ENCODE measurements at regions of chr6 and their contacts with region 1.

Region 1: DNA sequence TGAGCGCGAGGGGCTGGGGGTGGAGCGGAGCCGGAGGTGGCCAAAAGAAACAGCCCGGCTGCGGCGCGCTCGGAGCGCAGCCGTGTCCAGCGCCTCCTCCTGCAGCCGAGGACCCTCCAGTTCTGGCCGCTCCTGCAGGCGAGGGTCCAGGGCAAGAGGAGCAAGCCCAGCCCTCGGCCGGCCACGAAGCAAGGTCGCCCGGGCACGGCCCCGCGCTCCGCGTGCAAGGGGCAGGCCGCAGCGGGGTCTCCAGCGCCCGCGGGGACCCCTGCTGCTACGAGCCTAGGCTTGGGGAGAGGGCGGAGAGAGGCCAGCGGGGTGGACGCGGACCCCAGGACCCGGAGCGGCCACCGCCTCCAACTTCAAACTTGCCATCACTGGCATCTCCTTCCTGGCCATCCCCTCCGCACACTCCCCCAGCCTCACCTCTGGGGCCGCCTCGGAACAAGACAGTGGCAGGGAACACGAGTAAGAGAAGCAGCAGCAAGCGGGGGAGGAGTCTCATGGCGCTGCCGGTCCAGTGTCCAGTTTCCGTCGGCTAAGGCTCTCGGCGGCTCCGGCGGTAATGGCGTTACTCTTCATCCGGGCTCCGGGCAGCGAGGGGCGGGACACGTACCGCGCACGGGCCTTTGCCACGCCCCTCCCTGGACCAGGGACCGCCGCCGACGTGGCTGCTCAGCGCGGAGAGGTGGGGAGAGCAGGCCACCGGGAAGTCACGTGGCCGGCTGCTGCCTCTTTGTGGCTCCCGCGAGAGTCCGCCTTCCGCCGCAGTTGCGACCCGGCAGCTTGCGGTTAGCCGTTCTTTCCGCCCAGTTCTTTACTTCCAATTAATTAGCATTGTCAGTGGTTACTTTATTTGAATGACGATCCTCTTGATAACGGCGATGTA is at the start of gene SSR1:
- DNase-seq: peak; percentile 76 to 97 (median 84)
- ATAC-seq: peak; percentile 99
- H3K4me3 ChIP-seq: peak within 1 kb of the TSS; percentile 66
- H3K4me3 Mint-ChIP-seq: peak within 1 kb of the TSS; percentile 83 to 99 (median 94)
- H3K27ac ChIP-seq: peak within 1 kb of the TSS; percentile 76
- H3K27ac Mint-ChIP-seq: peak within 1 kb of the TSS; percentile 87 to 93 (median 92)
- H3K4me1 ChIP-seq: peaks cover 6 to 27% of the 10 kb centered on the region in 2 donors
- H3K4me1 Mint-ChIP-seq: peaks cover 31 to 65% (median 50%) of the 10 kb centered on the region in 7 donors
- H3K27me3 ChIP-seq: no peaks in the 10 kb centered on the region
- H3K27me3 Mint-ChIP-seq: no peaks in the 10 kb centered on the region
- total RNA-seq, gene SSR1: 75.0 to 178 (median 127) TPM

Region 2: DNA sequence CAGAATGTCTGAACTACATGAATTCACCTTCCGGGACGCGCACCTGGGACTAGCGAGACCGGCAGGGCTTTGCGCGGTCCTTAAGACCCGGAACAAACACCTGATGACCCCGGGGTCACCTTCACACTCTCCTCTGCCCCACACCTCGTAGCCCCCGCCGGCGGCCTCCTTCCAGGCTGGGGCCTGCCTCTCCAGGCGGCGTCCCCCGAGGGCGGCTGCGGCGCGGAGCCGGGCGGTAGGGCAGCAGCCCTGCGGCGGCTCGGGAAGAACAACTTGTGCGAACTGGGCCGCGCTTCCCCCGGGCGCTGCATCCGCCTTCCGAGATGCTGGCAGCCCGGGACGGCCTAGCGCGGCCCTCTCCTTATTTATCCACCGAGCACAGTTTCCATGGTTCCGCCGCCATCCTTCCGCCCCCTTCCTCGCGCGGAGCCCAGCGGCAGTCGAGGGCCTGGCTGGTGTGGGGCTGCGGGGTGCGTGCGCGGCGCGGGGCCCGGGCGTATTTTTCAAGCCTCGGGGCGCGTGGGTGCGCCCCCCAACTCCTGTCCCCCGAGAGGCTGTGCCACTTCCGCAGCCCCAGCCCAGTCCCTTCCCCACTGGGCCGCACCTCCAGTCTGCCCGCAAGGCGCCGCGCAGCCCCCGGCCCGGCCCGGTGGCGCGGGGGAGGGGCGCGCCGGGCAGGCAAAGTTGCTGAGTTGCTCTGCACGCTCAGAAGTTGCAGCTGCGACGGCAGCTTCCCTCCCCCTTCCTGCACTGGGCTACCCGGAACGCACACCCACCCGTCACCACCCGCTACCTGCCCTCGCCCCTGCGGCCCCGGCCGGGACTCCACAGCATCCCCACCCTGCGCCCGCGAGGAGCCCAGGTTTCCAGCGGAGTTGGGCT is 261.4 kb before region 1 on chr6:
- CTCF ChIA-PET with region 1: no interaction called
- POLR2A ChIA-PET with region 1: no interaction called
- intact Hi-C with region 1: loop called in 1 of 2 experiments (anchors 2 kb)
- DNase-seq: peak; percentile 34 to 81 (median 70)
- ATAC-seq: peak; percentile 83
- H3K4me3 ChIP-seq: peak overlapping the region; percentile 77
- H3K4me3 Mint-ChIP-seq: peak overlapping the region; percentile 20 to 89 (median 79)
- H3K27ac ChIP-seq: peak overlapping the region; percentile 59
- H3K27ac Mint-ChIP-seq: peak overlapping the region in 6 of 9 donors; percentile 69 to 86 (median 79)
- H3K4me1 ChIP-seq: peaks cover 0 to 4% of the 10 kb centered on the region in 2 donors
- H3K4me1 Mint-ChIP-seq: peaks cover 5 to 18% (median 11%) of the 10 kb centered on the region in 7 donors
- H3K27me3 ChIP-seq: no peaks in the 10 kb centered on the region
- H3K27me3 Mint-ChIP-seq: peaks cover 0 to 66% (median 0%) of the 10 kb centered on the region in 5 donors

Region 3: DNA sequence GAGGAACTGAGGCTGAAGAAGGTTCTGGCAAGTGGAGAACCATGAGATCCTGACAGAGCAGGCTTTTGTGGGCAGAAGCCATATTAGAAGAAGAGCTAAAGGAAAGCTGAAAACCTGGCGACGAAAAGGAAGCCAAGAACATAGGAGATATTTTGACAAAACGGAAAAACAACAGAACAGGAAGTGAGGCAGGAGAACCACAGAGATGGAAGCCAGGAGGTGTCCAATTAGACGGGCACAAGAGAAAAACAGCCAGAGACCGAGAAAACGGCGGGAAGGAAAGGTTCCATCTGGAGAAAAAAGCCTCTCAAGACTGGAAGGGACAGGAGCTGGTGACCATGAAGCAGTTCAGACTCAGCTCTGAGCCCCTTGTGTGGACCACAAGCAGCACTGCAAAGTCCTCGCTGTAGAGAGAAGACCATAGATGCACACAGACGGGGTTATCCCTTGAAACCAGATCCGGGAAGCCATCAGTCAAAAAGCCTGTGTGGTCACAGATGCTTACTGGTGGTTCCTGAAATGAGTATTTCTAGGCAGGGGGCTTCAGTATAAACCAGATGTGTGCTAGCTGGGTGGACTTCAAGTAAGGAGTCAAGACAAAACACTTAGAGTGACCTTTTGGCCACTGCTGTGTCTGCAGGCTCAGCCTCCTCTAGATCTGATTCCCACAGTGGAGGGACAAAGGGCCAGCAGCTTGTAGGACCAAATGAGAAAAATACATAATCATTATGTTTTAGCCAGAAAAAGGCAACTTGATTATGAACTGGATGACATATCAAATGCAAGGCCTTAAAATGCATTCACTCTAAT is 30.6 kb before region 1 on chr6:
- CTCF ChIA-PET with region 1: no interaction called
- POLR2A ChIA-PET with region 1: no interaction called
- intact Hi-C with region 1: loop called (anchors 2 kb)
- DNase-seq: peak in 2 of 9 donors; percentile 14
- ATAC-seq: no peak
- H3K4me3 ChIP-seq: no peak overlapping the region
- H3K4me3 Mint-ChIP-seq: peak overlapping the region; percentile 14 to 64 (median 38)
- H3K27ac ChIP-seq: peak overlapping the region; percentile 1
- H3K27ac Mint-ChIP-seq: peak overlapping the region; percentile 41 to 96 (median 89)
- H3K4me1 ChIP-seq: peaks cover 0 to 9% of the 10 kb centered on the region in 2 donors
- H3K4me1 Mint-ChIP-seq: peaks cover 15 to 29% (median 21%) of the 10 kb centered on the region in 7 donors
- H3K27me3 ChIP-seq: no peaks in the 10 kb centered on the region
- H3K27me3 Mint-ChIP-seq: no peaks in the 10 kb centered on the region

Region 4: DNA sequence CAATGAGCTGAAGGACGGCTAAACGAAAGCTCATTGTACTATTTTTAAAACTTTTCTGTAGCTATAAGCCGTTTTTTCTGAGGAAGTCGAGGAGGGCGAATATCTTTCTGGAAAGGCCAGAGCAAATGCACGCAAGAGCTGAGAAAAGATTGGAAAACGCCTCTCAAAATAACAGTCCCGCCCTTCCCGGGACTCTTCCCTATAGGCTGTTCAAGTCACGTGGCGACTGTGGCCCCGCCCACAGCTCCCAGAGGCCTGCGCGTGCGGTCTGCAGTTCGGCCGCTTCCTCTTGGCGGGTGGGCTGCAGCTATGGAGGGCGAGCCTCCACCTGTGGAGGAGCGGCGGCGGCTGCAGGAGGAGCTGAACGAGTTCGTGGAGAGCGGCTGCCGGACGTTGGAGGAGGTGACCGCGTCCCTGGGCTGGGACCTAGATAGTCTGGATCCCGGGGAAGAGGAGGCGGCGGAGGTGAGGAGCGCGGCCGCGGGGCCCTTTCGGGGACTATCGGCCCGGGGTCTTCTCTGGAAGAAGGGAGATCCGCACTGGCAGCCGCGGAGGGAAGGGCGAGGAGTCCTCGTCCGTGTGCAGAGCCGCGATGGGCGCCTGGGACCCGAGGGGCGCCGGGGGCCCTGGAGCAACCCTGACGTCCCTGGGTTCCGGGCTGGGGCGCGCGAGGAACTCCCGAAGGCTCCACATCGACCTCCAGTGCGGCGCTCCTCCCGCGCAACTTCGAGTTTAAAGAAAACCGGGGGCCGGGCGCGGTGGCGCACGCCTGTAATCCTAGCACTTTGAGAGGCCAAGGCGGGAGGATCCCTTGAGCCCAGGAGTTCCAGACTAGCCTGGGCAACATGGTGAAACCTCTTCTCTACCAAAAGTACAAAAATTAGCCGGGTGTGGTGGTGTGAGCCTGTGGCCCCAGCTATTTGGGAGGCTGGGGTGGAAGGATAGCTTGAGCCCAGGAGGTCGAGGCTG is 277.4 kb after region 1 on chr6 and contains the start of gene SNRNP48:
- CTCF ChIA-PET with region 1: no interaction called
- POLR2A ChIA-PET with region 1: no interaction called
- intact Hi-C with region 1: loop called (anchors 1 kb)
- DNase-seq: peak; percentile 83 to 93 (median 88)
- ATAC-seq: peak; percentile 99
- H3K4me3 ChIP-seq: peak within 1 kb of the TSS; percentile 89
- H3K4me3 Mint-ChIP-seq: peak within 1 kb of the TSS; percentile 93 to 100 (median 99)
- H3K27ac ChIP-seq: peak within 1 kb of the TSS; percentile 77
- H3K27ac Mint-ChIP-seq: peak within 1 kb of the TSS; percentile 90 to 97 (median 94)
- H3K4me1 ChIP-seq: peaks cover 12 to 17% of the 10 kb centered on the region in 2 donors
- H3K4me1 Mint-ChIP-seq: peaks cover 28 to 62% (median 54%) of the 10 kb centered on the region in 7 donors
- H3K27me3 ChIP-seq: no peaks in the 10 kb centered on the region
- H3K27me3 Mint-ChIP-seq: peaks cover 0 to 2% (median 0%) of the 10 kb centered on the region in 5 donors
- total RNA-seq, gene SNRNP48: 8.6 to 30.4 (median 15.3) TPM

Region 5: DNA sequence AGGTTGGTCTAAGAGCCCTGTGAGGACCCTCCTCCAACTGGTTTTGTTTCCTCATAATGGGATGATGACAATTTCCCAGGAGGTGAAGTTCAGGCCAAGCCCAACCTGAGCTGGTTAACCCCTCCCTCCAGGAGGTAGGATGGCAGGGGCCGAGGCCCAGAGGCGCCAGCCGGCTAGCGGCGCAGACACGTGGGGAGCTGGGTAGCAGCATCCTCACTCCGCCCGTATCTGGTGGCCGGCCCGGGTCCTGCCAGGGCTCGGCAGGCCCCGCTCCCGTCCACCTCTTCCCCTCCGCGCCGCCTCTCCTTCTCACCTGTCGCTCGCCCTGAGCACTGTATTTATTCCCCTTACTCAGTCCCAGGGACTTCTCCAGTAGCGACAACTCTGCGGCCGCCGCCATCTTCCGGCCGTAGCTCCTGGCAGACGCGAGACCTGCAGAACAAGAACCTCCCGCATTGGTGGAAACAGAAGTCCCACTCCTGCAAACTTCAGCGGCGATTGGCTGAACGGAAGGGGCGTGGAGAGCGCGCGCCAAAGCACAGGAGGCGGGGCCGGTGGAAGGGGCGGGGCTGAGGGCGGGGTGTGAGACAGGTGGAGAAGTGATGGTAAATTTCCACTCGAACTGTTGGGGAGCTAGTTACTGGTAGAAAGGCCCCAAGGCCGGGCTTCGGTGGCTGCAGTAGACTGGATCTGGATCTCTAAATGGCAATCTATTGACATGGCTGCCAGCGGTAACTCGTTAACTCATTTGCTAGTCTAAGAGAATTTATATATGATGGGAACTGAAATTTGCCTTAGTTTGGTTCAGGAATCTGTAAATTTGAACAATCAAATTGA is 789.5 kb after region 1 on chr6 and contains the start of gene EEF1E1:
- CTCF ChIA-PET with region 1: no interaction called
- POLR2A ChIA-PET with region 1: no interaction called
- intact Hi-C with region 1: loop called (anchors 1 to 5 kb)
- DNase-seq: peak; percentile 77 to 97 (median 92)
- ATAC-seq: peak; percentile 100
- H3K4me3 ChIP-seq: peak within 1 kb of the TSS; percentile 75
- H3K4me3 Mint-ChIP-seq: peak within 1 kb of the TSS; percentile 85 to 100 (median 98)
- H3K27ac ChIP-seq: peak within 1 kb of the TSS; percentile 78
- H3K27ac Mint-ChIP-seq: peak within 1 kb of the TSS; percentile 91 to 99 (median 95)
- H3K4me1 ChIP-seq: peaks cover 6 to 8% of the 10 kb centered on the region in 2 donors
- H3K4me1 Mint-ChIP-seq: peaks cover 21 to 43% (median 34%) of the 10 kb centered on the region in 7 donors
- H3K27me3 ChIP-seq: no peaks in the 10 kb centered on the region
- H3K27me3 Mint-ChIP-seq: peaks cover 13 to 27% (median 18%) of the 10 kb centered on the region in 5 donors
- total RNA-seq, gene EEF1E1: 10.2 to 41.0 (median 21.0) TPM

Measured in naive thymus-derived CD4-positive, alpha-beta T cell (primary cell).